ENCODE measurements at regions of chr16 and their contacts with region 1.

Region 1: GRCh38 chr16:85321509-85322271 is 209.4 kb upstream of the CIBAR2 start:
- DNase-seq: peak; percentile 98 to 99
- ATAC-seq: peak; percentile 96
- H3K4me3 ChIP-seq: no peak overlapping the region
- H3K27ac ChIP-seq: peak overlapping the region in 1 of 2 donors; percentile 85
- H3K4me1 ChIP-seq: no peaks in the 10 kb centered on the region
- H3K27me3 ChIP-seq: no peaks in the 10 kb centered on the region

Region 2: DNA sequence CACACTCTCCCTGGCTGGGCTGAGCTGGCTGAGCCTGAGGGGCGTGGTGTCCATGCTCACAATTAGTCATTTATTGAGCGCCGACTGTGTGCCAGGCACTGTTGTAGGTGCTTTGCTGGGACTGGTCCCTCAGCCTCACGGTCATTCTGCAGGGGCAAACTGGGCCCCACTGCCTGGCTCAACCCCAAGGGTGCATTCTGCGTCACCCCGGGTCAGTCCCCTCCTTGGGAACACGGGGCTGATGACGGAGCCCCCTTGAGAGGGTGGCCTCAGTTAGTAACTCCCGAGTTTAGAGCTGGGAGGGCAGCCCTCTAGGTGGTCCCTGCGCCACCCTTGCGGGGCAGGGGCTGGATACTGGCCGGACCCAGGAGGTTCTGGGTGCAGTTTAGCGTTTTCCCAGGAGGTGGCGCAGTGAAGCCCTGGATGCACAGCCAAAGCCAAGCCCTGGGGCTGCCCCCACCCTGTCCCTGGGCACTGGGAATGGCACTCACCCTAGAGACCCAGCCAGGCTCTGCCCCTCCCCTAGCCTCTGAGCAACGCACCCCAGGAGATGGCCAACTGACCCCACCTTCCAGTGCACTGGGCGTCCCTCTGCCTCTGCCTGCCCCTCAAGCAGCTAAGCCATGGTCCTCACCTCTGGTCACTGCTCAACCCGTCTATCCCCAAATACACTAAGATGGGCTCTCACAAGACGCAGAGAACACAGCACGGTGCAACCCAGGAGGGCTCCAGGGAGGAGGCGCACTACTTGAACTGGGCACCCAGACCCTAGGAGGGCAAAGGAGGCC is 48.2 kb after region 1 on chr16:
- intact Hi-C with region 1: loop called in 1 of 2 experiments (anchors 5 kb)
- DNase-seq: peak; percentile 75 to 92
- ATAC-seq: peak; percentile 53
- H3K4me3 ChIP-seq: no peak overlapping the region
- H3K27ac ChIP-seq: peak overlapping the region in 1 of 2 donors; percentile 43
- H3K4me1 ChIP-seq: no peaks in the 10 kb centered on the region
- H3K27me3 ChIP-seq: no peaks in the 10 kb centered on the region

Region 3: GRCh38 chr16:85393674-85394483 is 72.2 kb after region 1 on chr16:
- intact Hi-C with region 1: loop called in 1 of 2 experiments (anchors 2 kb)
- DNase-seq: peak; percentile 65 to 88
- ATAC-seq: no peak
- H3K4me3 ChIP-seq: no peak overlapping the region
- H3K27ac ChIP-seq: no peak overlapping the region
- H3K4me1 ChIP-seq: no peaks in the 10 kb centered on the region
- H3K27me3 ChIP-seq: no peaks in the 10 kb centered on the region

Region 4: DNA sequence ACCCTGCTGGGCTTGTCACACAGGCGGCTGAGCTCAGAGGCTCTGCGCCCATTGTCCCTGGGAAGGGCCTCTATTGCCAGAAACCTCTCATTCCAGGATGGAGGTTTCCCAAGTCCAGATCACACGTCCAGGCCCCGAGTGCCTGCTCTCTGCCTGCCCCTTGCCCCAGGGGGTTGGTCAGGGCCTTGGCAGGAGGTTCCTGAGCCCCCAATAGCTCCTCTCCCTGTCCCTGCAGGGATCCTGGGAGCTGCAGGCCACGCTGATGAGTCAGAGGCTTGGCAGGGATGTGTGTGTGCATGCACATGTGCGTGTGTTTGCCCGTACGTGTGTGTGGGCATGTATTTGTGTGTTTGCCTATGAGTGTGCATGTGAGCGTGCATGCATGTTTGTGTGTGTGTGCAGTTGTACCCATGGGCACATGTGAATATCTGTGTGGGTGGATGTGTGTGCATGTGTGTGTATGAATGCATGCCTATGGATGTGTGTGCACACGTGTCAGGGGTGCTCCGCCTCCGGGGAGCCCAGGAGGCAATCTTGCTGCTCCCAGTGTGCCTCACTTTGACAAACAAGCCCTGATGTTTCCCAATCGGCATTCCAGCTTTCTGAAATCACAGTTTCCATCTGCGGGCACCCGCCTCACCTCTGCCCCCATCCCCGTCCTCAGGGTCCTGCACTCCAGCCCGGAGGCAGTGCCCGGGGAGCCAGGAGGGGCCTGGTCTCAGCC is 193.1 kb after region 1 on chr16:
- intact Hi-C with region 1: loop called in 1 of 2 experiments (anchors 2 kb)
- DNase-seq: peak; percentile 91 to 93
- ATAC-seq: peak; percentile 87
- H3K4me3 ChIP-seq: no peak overlapping the region
- H3K27ac ChIP-seq: peak overlapping the region; percentile 9 to 69
- H3K4me1 ChIP-seq: peaks cover 0 to 5% of the 10 kb centered on the region in 2 donors
- H3K27me3 ChIP-seq: no peaks in the 10 kb centered on the region